Right ventricle myocardium inferior (tissue), 1 donor: ENCODE measurements at regions of chr1 and their contacts with region 1.

Region 1: DNA sequence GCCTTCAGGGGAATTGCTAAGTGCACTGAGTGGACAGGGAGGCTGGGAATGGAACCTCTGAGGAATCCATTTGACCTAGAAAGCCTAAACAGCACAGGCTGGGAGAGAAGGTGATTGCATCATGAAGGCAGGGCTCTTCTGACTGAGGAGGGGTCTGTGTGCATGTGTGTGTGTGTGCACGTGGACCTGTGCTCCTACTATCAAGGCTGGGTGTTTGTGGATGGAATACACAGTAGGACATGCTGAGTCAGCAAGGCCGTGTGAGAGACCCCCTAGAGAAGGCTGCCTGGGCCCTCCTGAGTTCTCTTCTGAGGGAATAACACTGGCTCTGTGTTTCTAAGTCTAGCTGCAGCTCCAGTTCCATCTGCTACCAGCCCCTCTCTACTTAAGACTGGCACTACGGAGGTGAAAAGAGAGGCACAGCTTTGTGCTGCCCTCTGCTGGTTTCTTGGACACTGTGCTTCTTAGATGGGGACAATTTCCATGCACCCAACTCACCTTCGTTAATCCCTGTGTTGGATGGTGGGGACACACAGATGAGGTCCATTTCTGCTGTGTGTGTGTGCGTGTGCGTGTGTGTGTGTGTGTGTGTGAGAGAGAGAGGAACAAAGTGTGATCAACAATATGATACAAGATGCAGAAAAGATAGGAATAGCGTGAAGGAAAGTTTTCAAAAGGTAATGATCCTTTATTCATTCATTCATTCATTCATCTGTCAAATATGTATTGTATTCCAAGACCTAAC is 6.2 kb upstream of the EFCAB14 start:
- DNase-seq: no peak
- ATAC-seq: peak; percentile 92

Region 2: DNA sequence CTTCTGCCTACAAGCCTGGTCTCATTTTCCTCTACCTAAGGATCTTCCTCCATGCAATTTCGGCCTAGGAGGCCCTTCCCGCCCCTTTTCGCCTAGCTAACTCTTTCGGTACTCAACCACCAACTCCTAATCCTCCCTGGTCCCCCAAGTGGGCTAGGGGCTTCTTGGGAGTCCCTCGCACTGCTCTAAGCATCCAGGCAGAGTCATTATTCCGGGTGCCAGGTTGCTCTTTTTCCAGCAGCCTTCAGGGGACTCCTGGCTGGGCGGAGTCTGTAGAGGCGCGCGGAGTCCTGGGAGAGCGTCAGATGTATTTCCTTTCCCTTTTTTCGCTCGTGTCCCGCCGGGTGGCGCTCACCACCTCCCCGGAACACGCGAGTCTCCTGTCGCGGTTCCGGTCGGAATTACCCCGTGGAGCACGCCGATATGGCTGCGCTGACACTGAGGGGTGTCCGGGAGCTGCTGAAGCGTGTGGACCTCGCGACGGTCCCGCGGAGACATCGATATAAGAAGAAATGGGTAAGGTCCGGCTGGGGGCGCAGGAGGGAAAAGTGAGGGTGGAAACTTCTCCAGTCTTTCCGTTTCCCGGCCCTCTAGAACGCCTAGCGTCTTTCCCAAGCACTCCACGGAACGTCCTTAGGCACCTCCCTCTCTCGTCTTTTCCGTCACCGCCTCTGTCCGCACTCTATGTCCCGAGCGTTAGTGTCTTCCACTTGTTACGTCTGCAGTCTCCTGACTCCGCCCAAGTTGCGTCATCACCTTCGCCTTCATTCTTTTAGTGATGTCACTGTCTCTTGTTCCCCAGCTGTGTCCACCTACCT is 384.6 kb before region 1 on chr1 and contains the start of gene NSUN4:
- intact Hi-C with region 1: no loop called
- DNase-seq: peak; percentile 96
- ATAC-seq: peak; percentile 98
- total RNA-seq, gene NSUN4: 14.0 TPM

Region 3: DNA sequence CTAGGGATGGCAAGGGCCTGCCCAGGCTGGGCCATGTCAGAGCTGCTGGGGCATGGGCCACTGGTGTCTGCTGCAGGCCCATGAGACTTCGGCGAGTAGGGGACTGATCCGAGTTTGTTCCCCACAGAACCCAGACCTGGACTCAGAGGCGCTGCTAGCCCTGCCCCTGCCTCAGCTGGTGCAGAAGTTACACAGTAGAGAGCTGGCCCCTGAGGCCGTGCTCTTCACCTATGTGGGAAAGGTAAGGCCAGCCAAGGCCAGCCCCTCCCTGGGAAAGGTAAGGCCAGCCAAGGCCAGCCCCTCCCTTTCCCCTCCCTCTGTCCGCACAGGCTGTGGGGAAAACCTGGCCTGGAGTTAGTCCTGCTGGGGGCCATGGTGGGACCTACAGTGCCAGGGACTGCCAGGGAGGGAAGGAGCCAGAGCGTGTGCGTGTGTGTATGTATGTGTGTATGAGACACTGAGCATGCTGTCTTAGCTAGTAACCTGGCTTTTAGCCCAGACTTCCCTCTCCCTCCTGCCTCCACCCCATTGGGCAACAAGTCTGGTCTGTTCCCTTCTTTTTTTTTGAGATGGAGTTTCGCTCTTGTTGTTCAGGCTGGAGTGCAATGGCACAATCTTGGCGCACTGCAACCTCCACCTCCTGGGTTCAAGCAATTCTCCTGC is 323.1 kb before region 1 on chr1:
- intact Hi-C with region 1: no loop called
- DNase-seq: peak; percentile 77
- ATAC-seq: peak; percentile 73

Region 4: DNA sequence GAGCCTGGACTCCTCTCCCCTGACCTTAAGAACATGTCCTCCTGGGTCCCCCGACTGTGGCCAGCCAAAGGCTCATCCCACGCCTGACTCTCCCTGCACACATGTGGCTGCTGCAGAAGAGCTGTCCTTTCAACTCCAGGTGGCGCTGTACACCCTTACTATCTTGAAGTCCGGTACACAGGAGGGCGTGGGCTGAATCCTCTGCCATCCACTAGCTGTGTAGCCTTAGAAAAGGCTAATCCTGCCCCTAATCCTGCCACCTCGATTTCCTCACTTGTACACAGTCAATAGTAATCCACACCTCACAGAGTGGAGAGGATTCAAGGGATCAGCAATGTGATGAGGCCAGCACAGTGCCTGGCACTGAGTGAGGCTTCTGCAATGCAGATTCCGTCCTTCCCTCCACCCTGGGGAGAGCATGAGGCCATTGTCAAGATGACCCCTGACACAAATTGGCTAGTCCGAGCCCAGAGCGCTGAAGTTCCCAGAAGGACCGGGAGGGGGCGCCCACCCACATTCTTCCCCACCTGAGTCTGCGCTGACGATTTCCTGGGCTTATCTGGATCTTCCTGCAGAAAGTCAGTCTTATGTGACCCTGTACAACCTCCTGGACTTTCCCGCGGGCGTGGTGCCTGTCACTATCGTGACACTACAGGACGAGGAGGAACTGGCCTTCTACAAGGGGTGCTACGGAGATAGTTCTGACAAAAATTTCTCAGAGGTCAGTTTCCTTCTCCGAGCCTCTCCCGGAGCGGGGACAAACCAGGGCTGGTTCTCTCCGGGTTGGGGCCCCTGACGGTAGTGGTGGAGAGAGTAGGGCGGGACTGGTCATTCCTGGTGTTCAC is 282.6 kb before region 1 on chr1:
- intact Hi-C with region 1: loop called (anchors 10 kb)
- DNase-seq: peak; percentile 85
- ATAC-seq: peak; percentile 65

Region 5: GRCh38 chr1:46477153-46477929 is 247.8 kb before region 1 on chr1:
- intact Hi-C with region 1: loop called (anchors 5 kb)
- DNase-seq: peak; percentile 86
- ATAC-seq: peak; percentile 74

Region 6: DNA sequence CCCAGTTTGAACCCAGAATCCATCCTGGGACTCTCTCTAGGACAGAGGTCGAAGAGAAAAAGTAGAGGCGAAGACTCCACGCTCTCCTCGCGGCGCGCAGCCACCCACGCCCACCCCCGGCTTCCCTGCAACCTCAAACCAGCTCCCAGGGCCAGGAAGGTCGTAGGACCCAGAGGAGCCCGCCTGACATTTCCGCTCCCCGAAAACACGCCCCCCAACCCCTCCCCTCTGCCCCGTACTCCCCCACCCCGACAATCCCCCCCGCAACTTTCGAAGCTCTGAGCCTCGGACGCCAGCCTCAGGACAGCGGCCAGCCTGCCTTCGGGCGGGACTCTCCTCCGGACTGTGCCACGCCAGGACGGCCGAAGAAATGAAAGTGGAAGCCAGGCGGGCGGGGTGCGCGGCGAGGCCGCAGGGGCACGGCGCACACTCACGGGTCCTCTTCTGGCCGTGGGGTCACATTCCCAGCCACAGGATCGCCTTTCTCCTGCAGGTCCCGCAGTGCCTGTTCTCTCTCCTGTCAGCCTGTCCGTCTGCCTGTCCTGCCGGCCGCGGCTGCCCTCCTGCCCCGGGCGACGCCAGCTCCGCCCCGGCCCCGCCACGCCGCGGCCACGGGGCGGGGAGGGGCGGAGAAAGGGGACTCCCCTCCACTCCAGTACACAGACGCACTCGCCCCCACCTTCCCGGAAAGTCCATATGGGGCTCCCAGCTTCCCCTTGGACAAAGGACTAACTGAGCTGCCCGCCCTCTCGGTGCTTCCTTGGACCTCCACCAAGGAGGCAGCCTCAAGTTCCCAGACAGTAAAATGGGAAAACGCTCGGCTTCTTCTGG is 108.7 kb before region 1 on chr1 and contains the start of gene MOB3C:
- intact Hi-C with region 1: no loop called
- DNase-seq: peak; percentile 94
- ATAC-seq: peak; percentile 94
- total RNA-seq, gene MOB3C: 13.9 TPM